Naive thymus-derived CD4-positive, alpha-beta T cell (primary cell): ENCODE measurements at regions of chr2 and their contacts with region 1.

Region 1: DNA sequence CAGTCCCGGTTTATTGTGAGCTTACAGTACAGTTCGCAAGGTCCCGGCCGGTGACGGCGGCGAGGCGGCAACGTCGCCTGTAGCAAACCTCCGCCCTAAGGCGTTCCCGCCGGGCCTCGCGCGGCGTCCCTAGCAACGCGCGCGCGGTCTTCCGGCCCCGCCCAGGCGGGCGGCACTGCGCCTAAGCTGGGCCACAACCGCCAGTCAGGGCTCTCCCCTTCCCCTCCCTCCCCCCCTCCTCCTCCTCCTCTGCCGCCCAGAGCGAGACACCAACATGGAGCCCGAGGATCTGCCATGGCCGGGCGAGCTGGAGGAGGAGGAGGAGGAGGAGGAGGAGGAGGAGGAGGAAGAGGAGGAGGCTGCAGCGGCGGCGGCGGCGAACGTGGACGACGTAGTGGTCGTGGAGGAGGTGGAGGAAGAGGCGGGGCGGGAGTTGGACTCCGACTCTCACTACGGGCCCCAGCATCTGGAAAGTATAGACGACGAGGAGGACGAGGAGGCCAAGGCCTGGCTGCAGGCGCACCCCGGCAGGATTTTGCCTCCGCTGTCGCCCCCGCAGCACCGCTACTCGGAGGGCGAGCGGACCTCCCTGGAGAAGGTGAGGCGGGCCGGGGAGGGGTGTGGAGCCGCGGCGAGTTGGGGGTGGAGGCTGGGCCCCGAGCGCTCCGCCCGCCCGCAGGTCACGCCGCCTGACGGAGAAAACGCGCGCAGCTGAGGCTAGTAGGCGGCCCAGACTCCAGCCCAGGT is at the start of gene ALMS1:
- DNase-seq: peak; percentile 80 to 91 (median 87)
- ATAC-seq: peak; percentile 94
- H3K4me3 ChIP-seq: peak within 1 kb of the TSS; percentile 85
- H3K4me3 Mint-ChIP-seq: peak within 1 kb of the TSS; percentile 81 to 96 (median 90)
- H3K27ac ChIP-seq: peak within 1 kb of the TSS; percentile 92
- H3K27ac Mint-ChIP-seq: peak within 1 kb of the TSS; percentile 93 to 98 (median 96)
- H3K4me1 ChIP-seq: peaks cover 4 to 18% of the 10 kb centered on the region in 2 donors
- H3K4me1 Mint-ChIP-seq: peaks cover 23 to 47% (median 44%) of the 10 kb centered on the region in 7 donors
- H3K27me3 ChIP-seq: no peaks in the 10 kb centered on the region
- H3K27me3 Mint-ChIP-seq: peaks cover 0 to 23% (median 0%) of the 10 kb centered on the region in 5 donors
- total RNA-seq, gene ALMS1: 16.3 to 46.7 (median 23.5) TPM

Region 2: DNA sequence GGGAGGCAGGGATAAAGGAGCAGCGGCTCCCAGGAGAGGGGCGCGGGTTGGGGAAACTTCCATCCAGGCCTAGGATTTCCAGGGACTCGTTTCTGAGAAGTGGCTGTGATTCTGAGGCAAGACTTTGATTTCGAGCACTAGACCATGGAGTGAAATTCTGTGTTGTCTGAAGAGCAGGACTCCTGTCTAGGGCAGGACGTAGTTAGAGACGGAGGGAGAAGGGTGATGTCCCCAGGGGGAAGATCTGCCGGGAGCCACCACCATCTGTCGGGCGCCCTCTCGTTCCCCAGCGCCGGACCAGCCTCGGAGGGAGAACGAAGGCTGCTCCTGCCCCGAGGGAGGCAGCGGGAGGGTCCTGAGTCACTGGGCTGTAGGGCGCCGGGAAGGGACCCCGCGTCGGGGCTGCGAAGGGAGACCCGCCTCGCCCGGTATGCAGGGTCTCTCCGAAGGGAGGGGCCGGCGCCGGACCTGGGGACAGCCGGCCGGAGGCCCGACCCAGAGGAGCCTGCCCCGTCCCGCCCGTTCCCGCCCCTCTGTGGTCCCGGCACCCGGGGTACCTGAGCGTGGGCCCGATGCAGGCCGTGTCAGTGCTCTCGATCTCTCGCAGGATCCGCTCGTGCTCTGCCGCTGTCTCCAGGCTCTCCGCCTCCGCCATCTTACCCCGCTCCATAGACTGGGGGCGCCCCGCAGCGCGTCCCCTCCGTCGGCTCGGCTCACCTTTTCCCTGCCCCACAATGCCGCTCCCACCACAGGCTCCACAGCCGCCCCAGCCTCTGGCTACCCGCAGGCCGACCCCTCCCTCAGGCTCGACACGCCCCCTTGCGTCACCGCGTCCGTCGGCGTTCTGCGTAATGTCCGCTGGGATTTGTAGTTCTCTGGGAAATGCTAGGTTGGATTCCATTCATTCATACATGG is 560.3 kb before region 1 on chr2 and contains the start of gene EXOC6B:
- CTCF ChIA-PET with region 1: no interaction called
- POLR2A ChIA-PET with region 1: no interaction called
- intact Hi-C with region 1: loop called in 1 of 2 experiments (anchors 1 kb)
- DNase-seq: peak; percentile 78 to 87 (median 84)
- ATAC-seq: peak; percentile 96
- H3K4me3 ChIP-seq: peak within 1 kb of the TSS; percentile 70
- H3K4me3 Mint-ChIP-seq: peak within 1 kb of the TSS; percentile 88 to 99 (median 98)
- H3K27ac ChIP-seq: peak within 1 kb of the TSS; percentile 69
- H3K27ac Mint-ChIP-seq: peak within 1 kb of the TSS; percentile 70 to 96 (median 92)
- H3K4me1 ChIP-seq: peaks cover 14 to 19% of the 10 kb centered on the region in 2 donors
- H3K4me1 Mint-ChIP-seq: peaks cover 24 to 48% (median 45%) of the 10 kb centered on the region in 7 donors
- H3K27me3 ChIP-seq: no peaks in the 10 kb centered on the region
- H3K27me3 Mint-ChIP-seq: peaks cover 0 to 12% (median 5%) of the 10 kb centered on the region in 5 donors
- total RNA-seq, gene EXOC6B: 14.3 to 21.9 (median 18.0) TPM

Region 3: GRCh38 chr2:73268830-73269685 is 116.7 kb before region 1 on chr2:
- CTCF ChIA-PET with region 1: no interaction called
- POLR2A ChIA-PET with region 1: no interaction called
- intact Hi-C with region 1: loop called in 1 of 2 experiments (anchors 1 kb)
- DNase-seq: peak; percentile 62 to 81 (median 76)
- ATAC-seq: peak; percentile 91
- H3K4me3 ChIP-seq: peak overlapping the region; percentile 35
- H3K4me3 Mint-ChIP-seq: peak overlapping the region in 9 of 10 donors; percentile 32 to 78 (median 64)
- H3K27ac ChIP-seq: peak overlapping the region; percentile 62
- H3K27ac Mint-ChIP-seq: peak overlapping the region in 4 of 9 donors; percentile 29 to 81 (median 56)
- H3K4me1 ChIP-seq: peaks cover 0 to 12% of the 10 kb centered on the region in 2 donors
- H3K4me1 Mint-ChIP-seq: peaks cover 23 to 34% (median 26%) of the 10 kb centered on the region in 7 donors
- H3K27me3 ChIP-seq: no peaks in the 10 kb centered on the region
- H3K27me3 Mint-ChIP-seq: no peaks in the 10 kb centered on the region

Region 4: DNA sequence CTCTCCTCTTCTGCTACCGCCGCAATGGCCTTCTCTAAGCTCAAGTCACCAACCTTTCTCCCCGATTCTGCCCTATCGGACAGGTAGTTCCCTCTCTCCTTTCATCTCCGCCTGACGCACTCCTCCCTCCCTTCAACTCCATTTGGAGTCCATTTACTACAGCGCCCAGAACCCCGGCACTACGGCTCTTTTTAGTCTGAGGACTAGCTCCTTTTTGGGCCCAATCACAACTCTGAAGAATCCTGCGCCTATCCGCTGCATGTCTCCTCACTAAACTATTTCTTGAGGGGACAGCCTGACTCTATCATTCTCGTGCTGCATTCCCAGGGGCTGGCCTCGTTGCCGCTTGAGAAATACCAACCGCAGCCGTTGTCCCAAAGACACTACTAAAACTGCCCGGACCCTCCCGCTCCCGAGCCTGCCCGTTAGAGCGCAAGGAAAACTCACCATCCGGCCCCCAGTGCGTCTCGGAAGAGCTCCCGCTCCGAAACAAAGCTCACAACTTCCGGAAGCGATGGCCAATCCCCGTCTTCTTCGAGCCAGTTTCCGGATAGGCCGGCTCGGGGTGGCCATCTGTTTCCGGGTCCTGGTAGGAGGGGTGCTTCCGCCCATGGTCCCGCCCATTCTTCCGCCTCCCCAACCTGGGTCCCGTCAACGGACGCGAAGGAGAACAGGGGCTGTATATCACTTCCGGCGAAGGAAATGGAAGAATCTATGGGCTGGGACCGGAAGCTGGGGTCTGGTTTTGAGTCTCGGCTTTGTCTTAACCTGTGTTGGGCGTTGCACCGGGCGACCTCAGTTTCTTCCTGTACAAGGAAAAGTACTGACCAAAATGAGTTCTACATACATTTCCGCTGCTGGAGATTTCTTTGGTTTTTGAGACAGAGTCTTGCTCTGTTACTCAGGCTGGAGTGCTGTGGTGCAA is 351.3 kb after region 1 on chr2 and contains the start of gene TPRKB:
- CTCF ChIA-PET with region 1: no interaction called
- POLR2A ChIA-PET with region 1: interaction called, 6 read pairs
- intact Hi-C with region 1: loop called (anchors 1 kb)
- DNase-seq: peak; percentile 73 to 95 (median 94)
- ATAC-seq: peak; percentile 99
- H3K4me3 ChIP-seq: peak within 1 kb of the TSS; percentile 78
- H3K4me3 Mint-ChIP-seq: peak within 1 kb of the TSS; percentile 92 to 98 (median 98)
- H3K27ac ChIP-seq: peak within 1 kb of the TSS; percentile 67
- H3K27ac Mint-ChIP-seq: peak within 1 kb of the TSS; percentile 85 to 97 (median 91)
- H3K4me1 ChIP-seq: peaks cover 8 to 14% of the 10 kb centered on the region in 2 donors
- H3K4me1 Mint-ChIP-seq: peaks cover 10 to 31% (median 21%) of the 10 kb centered on the region in 7 donors
- H3K27me3 ChIP-seq: no peaks in the 10 kb centered on the region
- H3K27me3 Mint-ChIP-seq: peaks cover 0 to 2% (median 0%) of the 10 kb centered on the region in 5 donors
- total RNA-seq, gene TPRKB: 16.5 to 34.6 (median 27.5) TPM

Region 5: GRCh38 chr2:74413001-74413698 is 1027.4 kb after region 1 on chr2:
- CTCF ChIA-PET with region 1: no interaction called
- POLR2A ChIA-PET with region 1: no interaction called
- intact Hi-C with region 1: no loop called
- DNase-seq: no peak
- ATAC-seq: no peak
- H3K4me3 ChIP-seq: no peak overlapping the region
- H3K4me3 Mint-ChIP-seq: peak overlapping the region in 9 of 10 donors; percentile 7 to 80 (median 69)
- H3K27ac ChIP-seq: no peak overlapping the region
- H3K27ac Mint-ChIP-seq: peak overlapping the region in 5 of 9 donors; percentile 45 to 80 (median 68)
- H3K4me1 ChIP-seq: peaks cover 0 to 13% of the 10 kb centered on the region in 2 donors
- H3K4me1 Mint-ChIP-seq: peaks cover 8 to 38% (median 29%) of the 10 kb centered on the region in 7 donors
- H3K27me3 ChIP-seq: peaks cover 0 to 4% of the 10 kb centered on the region in 2 donors
- H3K27me3 Mint-ChIP-seq: peaks cover 0 to 22% (median 4%) of the 10 kb centered on the region in 5 donors

Region 6: DNA sequence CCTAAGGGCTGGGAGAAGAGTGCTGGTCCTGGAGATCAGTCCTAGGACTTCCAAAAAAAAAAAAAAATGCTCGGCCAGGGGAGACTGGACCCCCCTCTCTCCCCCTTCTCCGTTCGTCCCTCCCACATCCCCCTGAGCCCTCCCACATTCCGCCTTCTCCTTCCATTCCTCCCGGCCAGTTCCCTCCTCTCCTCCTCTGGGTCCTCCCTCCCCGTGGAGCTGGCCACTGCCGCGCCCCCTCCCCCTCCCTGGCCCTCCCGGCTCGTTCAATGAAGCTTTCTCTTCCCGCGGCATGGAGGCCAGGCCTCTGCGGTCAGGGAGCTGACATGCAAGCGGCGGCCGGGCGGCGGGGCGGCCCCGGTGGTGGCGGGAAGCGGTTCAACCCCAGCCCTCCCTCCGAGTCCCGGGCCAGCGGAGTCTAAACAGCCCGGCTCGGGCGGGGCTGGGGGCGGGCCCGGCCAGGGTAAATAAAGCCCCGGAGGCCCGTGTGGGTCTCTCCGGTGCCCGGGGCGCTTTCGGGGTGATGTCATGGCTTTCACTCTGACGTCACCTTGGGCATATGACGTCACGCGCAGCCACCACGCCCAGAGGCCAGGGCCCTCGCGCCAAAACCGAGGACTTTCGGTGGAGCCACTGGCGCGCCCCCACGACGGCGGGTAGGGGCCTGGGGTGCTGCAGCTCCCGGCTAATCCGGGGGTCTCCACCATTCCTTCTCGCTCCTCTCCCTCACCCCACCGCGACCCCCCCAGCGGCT is 1168.3 kb after region 1 on chr2 and contains the start of gene LOXL3:
- CTCF ChIA-PET with region 1: no interaction called
- POLR2A ChIA-PET with region 1: no interaction called
- intact Hi-C with region 1: loop called in 1 of 2 experiments (anchors 10 kb)
- DNase-seq: peak in 8 of 9 donors; percentile 63 to 87 (median 76)
- ATAC-seq: peak; percentile 67
- H3K4me3 ChIP-seq: peak within 1 kb of the TSS; percentile 70
- H3K4me3 Mint-ChIP-seq: peak within 1 kb of the TSS; percentile 85 to 96 (median 92)
- H3K27ac ChIP-seq: peak within 1 kb of the TSS; percentile 76
- H3K27ac Mint-ChIP-seq: peak within 1 kb of the TSS; percentile 62 to 95 (median 86)
- H3K4me1 ChIP-seq: peaks cover 7 to 17% of the 10 kb centered on the region in 2 donors
- H3K4me1 Mint-ChIP-seq: peaks cover 9 to 31% (median 18%) of the 10 kb centered on the region in 7 donors
- H3K27me3 ChIP-seq: peaks cover 0 to 10% of the 10 kb centered on the region in 2 donors
- H3K27me3 Mint-ChIP-seq: peaks cover 21 to 27% (median 24%) of the 10 kb centered on the region in 5 donors
- total RNA-seq, gene LOXL3: 0.50 to 6.9 (median 0.81) TPM

Region 7: GRCh38 chr2:74958274-74959105 is 1572.7 kb after region 1 on chr2 and contains the start of gene POLE4:
- CTCF ChIA-PET with region 1: no interaction called
- POLR2A ChIA-PET with region 1: no interaction called
- intact Hi-C with region 1: loop called in 1 of 2 experiments (anchors 2 kb)
- DNase-seq: peak; percentile 89 to 96 (median 95)
- ATAC-seq: peak; percentile 95
- H3K4me3 ChIP-seq: peak within 1 kb of the TSS; percentile 78
- H3K4me3 Mint-ChIP-seq: peak within 1 kb of the TSS; percentile 70 to 88 (median 85)
- H3K27ac ChIP-seq: peak within 1 kb of the TSS; percentile 87
- H3K27ac Mint-ChIP-seq: peak within 1 kb of the TSS; percentile 70 to 96 (median 89)
- H3K4me1 ChIP-seq: peaks cover 9 to 14% of the 10 kb centered on the region in 2 donors
- H3K4me1 Mint-ChIP-seq: peaks cover 30 to 87% (median 65%) of the 10 kb centered on the region in 7 donors
- H3K27me3 ChIP-seq: no peaks in the 10 kb centered on the region
- H3K27me3 Mint-ChIP-seq: no peaks in the 10 kb centered on the region
- total RNA-seq, gene POLE4: 37.8 to 49.1 (median 43.6) TPM